ENCODE measurements at regions of chr6 and their contacts with region 1.

Region 1: GRCh38 chr6:117555882-117556498 is 46.3 kb downstream of the GOPC start:
- DNase-seq: no peak
- CTCF ChIP-seq: peak; percentile 70

Region 2: GRCh38 chr6:117449549-117450439 is 106.2 kb before region 1 on chr6:
- in situ Hi-C with region 1: loop called (anchors 10 kb)
- DNase-seq: peak; percentile 35
- CTCF ChIP-seq: peak; percentile 64

Region 3: GRCh38 chr6:118044275-118044674 is 488.3 kb after region 1 on chr6:
- in situ Hi-C with region 1: no loop called
- DNase-seq: no peak
- CTCF ChIP-seq: no peak

Measured in GM13976 (cell line).